GM13976 (cell line): ENCODE measurements at regions of chr2 and their contacts with region 1.

Region 1: GRCh38 chr2:212974692-212975091 is 176.7 kb downstream of the IKZF2 start:
- DNase-seq: no peak
- CTCF ChIP-seq: no peak

Region 2: GRCh38 chr2:212193056-212193455 is 781.6 kb before region 1 on chr2:
- in situ Hi-C with region 1: no loop called
- DNase-seq: no peak
- CTCF ChIP-seq: no peak

Region 3: GRCh38 chr2:212686285-212686895 is 288.3 kb before region 1 on chr2:
- in situ Hi-C with region 1: loop called (anchors 25 kb)
- DNase-seq: peak; percentile 72
- CTCF ChIP-seq: peak; percentile 58